H1 (cell line): ENCODE measurements at regions of chr22 and their contacts with region 1.

Region 1: DNA sequence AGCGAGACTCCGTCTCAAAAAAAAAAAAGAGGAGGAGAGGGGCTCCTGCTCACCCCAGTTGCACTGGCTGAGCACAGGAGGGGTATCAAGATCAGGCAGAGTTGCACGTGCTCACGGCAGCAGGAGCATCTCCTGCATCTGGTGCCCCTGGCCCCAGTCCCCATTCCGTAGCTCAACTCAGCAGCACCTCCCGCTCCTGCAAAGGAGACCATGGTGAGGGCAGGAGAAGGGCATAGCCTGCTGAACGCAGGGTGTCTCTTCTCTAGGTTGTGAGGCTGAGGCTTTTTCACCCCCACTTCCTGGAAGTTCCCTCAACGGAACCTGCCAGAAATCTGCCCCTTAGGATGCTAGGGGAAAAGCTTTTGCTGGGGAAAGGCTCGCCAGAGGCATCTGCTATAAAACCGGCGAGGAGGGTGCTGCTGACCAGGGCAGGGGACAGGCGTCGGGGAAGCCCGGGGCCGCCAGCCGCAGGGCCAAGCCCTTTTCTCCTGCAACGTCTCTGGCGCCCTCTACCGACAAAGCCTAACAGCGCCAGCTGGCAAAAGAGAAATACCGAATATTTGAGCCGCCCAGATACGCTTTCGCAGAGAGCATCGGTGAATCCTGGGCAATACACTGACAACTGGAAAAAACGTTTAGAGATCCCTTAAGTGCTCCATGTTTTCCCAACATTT is 1.0 kb upstream of the PPP6R2 start:
- DNase-seq: peak; percentile 51 to 96
- H3K4me3 ChIP-seq: peak overlapping the region; percentile 44 to 94 (median 68)
- H3K27ac ChIP-seq: no peak overlapping the region
- H3K4me1 ChIP-seq: peaks cover 0 to 2% (median under 1%) of the 10 kb centered on the region in 4 experiments; a peak in 3 of 7 replicates
- H3K27me3 ChIP-seq: peaks cover 0 to 5% (median 0%) of the 10 kb centered on the region in 4 experiments; a peak in 3 of 7 replicates
- CTCF ChIP-seq: peak; percentile 80 to 99 (median 95)
- EP300 ChIP-seq: peak in 1 of 2 experiments; percentile 43; a peak in 1 of 3 replicates
- POLR2A ChIP-seq: no peak; a peak in 1 of 3 replicates
- RAD21 ChIP-seq: peak; percentile 83 to 93

Region 2: DNA sequence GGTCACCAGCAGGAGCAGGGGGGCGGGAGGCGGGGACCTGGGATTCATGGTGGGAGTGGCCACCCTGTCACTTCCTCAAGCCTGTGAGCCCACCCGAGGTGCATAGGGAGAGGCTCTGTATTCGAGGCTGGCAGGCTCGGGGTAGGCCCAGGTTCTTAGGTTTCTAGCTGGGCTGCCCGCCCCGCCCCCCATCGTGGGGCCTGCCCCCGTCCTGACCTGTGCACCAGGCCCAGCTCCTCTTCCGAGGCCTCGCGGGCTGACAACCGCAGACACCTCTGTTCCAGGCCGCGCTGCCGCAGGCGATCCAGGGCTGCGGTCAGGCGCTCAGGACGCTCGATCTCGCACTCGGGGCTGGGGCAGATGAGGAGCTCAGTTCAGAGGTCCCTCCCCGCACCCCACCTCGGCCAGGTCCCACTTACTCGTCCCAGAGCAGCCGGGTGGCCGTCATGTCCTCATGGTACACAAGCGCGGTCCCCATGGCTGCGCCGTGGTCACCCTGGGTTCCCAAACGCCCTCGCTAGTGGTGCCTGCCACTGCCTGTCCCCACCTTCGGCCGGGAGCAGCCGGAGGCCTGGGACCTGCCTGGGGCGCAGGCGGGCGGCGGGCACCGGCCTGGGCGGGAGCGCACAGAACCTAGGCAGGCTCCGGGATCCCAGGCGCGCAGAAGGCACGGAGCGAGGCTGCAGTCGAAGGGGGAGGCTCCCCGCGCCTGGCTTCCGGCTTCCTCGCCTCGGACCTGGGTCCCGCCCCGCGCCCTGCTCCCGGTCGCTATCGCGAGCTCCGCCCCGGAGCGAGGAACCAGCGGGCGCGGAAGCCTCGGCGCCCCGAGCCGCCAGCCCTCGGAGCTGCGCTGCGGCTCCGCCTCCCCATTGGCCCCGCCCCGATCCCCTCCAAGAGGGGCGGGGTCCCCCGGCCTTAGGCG is 91.3 kb before region 1 on chr22 and contains the start of gene HDAC10:
- CTCF ChIA-PET with region 1: interaction called, 12 read pairs
- POLR2A ChIA-PET with region 1: interaction called, 6 read pairs
- DNase-seq: peak in 1 of 2 experiments; percentile 92
- H3K4me3 ChIP-seq: peak within 1 kb of the TSS; percentile 54 to 80 (median 72)
- H3K27ac ChIP-seq: no peak within 1 kb of the TSS
- H3K4me1 ChIP-seq: peaks cover 0 to 16% (median 11%) of the 10 kb centered on the region in 4 experiments; a peak in 6 of 7 replicates
- H3K27me3 ChIP-seq: no peaks in the 10 kb centered on the region
- CTCF ChIP-seq: no peak
- EP300 ChIP-seq: no peak
- POLR2A ChIP-seq: peak in 1 of 2 experiments; percentile 44; a peak in 2 of 3 replicates
- RAD21 ChIP-seq: no peak
- total RNA-seq, gene HDAC10: 21.2 and 26.4 TPM in 2 replicates

Region 3: DNA sequence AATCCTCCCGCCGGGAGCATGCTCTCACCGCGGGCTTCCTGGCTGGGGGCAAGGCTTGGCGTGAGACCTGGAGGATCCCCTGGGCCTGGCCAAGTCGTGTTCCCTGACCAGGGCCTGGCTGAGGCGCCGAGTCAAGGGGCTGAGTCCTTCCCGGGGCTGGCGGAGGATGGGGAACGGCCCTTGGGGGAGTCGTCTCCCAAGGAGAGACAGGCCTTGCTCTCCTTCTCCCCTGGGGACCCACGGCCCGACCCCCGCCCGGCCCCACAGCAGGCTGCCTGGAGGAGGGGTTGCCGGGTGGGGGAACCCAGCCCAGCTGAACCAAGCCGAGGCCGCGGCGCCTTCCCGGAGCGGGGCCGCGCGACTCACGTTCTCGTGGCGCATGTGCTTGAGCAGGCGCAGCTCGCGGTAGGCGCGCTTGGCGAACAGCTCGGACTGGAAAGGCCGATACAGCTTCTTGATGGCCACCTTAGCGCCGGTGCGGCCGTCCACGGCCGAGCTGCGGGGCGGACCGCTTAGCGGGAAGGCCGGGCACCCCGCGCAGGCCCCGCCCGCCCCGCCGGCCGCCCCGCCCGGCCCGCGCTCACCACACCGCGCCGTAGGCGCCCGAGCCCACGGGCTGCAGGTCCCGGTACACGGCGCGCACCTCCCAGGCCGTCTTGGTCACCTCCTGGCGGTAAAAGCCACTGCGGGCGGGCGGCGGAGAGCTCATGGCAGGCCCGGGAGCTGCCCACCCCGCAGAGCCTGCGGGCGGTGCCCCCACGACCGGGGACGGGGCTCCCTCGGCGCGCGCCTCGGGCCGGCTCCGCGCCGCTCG is 81.1 kb before region 1 on chr22:
- CTCF ChIA-PET with region 1: interaction called, 12 read pairs
- POLR2A ChIA-PET with region 1: no interaction called
- DNase-seq: peak in 1 of 2 experiments; percentile 72
- H3K4me3 ChIP-seq: peak overlapping the region; percentile 35 to 73 (median 48)
- H3K27ac ChIP-seq: no peak overlapping the region
- H3K4me1 ChIP-seq: peaks cover 0 to 20% (median 10%) of the 10 kb centered on the region in 4 experiments; a peak in 6 of 7 replicates
- H3K27me3 ChIP-seq: peaks cover 1 to 22% (median 18%) of the 10 kb centered on the region in 4 experiments; a peak in 6 of 7 replicates
- CTCF ChIP-seq: no peak
- EP300 ChIP-seq: no peak
- POLR2A ChIP-seq: no peak
- RAD21 ChIP-seq: no peak

Region 4: GRCh38 chr22:50281913-50282312 is 60.2 kb before region 1 on chr22:
- CTCF ChIA-PET with region 1: interaction called, 39 read pairs
- POLR2A ChIA-PET with region 1: no interaction called
- DNase-seq: no peak
- H3K4me3 ChIP-seq: no peak overlapping the region
- H3K27ac ChIP-seq: 0 out of 2 replicates have a peak overlapping the region, but pooled peaks have one; percentile 24
- H3K4me1 ChIP-seq: peaks cover 0 to 2% (median 0%) of the 10 kb centered on the region in 4 experiments; a peak in 2 of 7 replicates
- H3K27me3 ChIP-seq: no peaks in the 10 kb centered on the region
- CTCF ChIP-seq: no peak
- EP300 ChIP-seq: no peak
- POLR2A ChIP-seq: no peak
- RAD21 ChIP-seq: no peak

Region 5: GRCh38 chr22:50298937-50299656 is 43.0 kb before region 1 on chr22:
- CTCF ChIA-PET with region 1: interaction called, 10 read pairs
- POLR2A ChIA-PET with region 1: no interaction called
- DNase-seq: no peak
- H3K4me3 ChIP-seq: peak overlapping the region in 3 of 4 experiments; percentile 30 to 68 (median 35); a peak in 5 of 8 replicates
- H3K27ac ChIP-seq: no peak overlapping the region
- H3K4me1 ChIP-seq: peaks cover 0 to 35% (median 20%) of the 10 kb centered on the region in 4 experiments; a peak in 6 of 7 replicates
- H3K27me3 ChIP-seq: no peaks in the 10 kb centered on the region; a peak in 2 of 7 replicates
- CTCF ChIP-seq: no peak
- EP300 ChIP-seq: no peak
- POLR2A ChIP-seq: no peak
- RAD21 ChIP-seq: no peak

Region 6: GRCh38 chr22:50326959-50327710 is 15.0 kb before region 1 on chr22 and contains the start of gene DENND6B:
- CTCF ChIA-PET with region 1: interaction called, 17 read pairs
- POLR2A ChIA-PET with region 1: interaction called, 7 read pairs
- DNase-seq: peak in 1 of 2 experiments; percentile 86
- H3K4me3 ChIP-seq: peak within 1 kb of the TSS; percentile 64 to 84 (median 69)
- H3K27ac ChIP-seq: no peak within 1 kb of the TSS; the same call in 1 of the 2 replicates
- H3K4me1 ChIP-seq: peaks cover 0 to 8% (median 2%) of the 10 kb centered on the region in 4 experiments; a peak in 4 of 7 replicates
- H3K27me3 ChIP-seq: peaks cover 1 to 13% (median 12%) of the 10 kb centered on the region in 4 experiments; a peak in 6 of 7 replicates
- CTCF ChIP-seq: peak; percentile 56 to 90 (median 59)
- EP300 ChIP-seq: no peak
- POLR2A ChIP-seq: peak in 1 of 2 experiments; percentile 54; a peak in 1 of 3 replicates
- RAD21 ChIP-seq: peak; percentile 15 to 63; a peak in 3 of 4 replicates
- total RNA-seq, gene DENND6B: 1.1 TPM in 2 replicates